AG04449 (cell line): ENCODE measurements at regions of chr5 and their contacts with region 1.

Region 1: GRCh38 chr5:149035372-149035790 is 27.5 kb downstream of the SH3TC2 start:
- DNase-seq: no peak
- H3K4me3 ChIP-seq: no peak overlapping the region
- CTCF ChIP-seq: peak; percentile 92

Region 2: GRCh38 chr5:148725677-148726076 is 309.7 kb before region 1 on chr5:
- CTCF ChIA-PET with region 1: interaction called, 911 read pairs
- POLR2A ChIA-PET with region 1: no interaction called
- DNase-seq: no peak
- H3K4me3 ChIP-seq: no peak overlapping the region
- CTCF ChIP-seq: no peak

Region 3: DNA sequence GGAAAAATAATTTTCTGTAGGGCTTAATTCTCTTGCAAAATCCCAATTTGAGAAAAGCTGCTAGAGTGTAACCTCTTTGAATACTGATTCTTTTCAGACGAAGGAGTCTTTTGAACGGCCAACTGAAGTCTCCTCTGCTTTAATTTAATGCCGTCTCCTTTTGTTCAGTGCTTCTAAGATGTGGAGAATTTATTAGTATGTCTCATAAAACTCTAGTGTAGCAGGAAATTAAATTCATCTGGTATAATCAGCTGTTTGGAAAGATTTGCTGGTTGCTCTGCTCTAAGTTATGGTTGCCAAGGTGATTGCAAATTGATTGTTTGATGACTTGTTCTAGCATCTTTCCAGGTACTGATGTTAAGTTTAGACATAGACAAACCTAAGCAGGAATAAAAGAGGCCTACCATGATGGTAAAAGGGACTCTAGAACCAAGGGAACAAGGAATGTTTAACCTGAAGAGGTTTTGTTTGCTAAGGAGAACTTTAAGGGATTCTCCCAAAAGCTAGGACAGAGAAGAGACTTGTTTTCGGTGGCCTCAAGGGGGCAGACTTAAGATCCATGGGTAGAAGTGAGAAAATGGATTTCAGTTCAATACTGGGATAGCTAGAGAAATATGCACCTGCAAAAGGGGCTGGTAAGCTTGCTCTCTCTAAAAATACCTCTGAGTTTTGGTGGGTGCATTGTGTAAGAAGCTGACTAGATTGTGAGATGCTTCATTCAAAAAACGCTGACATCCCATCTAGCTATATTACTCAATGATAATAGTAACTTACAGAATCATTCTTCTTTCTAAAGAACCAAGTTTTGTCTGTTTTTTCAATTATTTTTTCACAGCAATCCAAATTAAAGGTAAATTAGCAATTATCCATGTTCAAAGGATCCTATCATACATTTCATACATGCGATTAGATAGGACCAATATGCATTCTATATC is 214.7 kb before region 1 on chr5:
- CTCF ChIA-PET with region 1: interaction called, 41 read pairs
- POLR2A ChIA-PET with region 1: no interaction called
- DNase-seq: no peak
- H3K4me3 ChIP-seq: no peak overlapping the region
- CTCF ChIP-seq: peak; percentile 53

Region 4: DNA sequence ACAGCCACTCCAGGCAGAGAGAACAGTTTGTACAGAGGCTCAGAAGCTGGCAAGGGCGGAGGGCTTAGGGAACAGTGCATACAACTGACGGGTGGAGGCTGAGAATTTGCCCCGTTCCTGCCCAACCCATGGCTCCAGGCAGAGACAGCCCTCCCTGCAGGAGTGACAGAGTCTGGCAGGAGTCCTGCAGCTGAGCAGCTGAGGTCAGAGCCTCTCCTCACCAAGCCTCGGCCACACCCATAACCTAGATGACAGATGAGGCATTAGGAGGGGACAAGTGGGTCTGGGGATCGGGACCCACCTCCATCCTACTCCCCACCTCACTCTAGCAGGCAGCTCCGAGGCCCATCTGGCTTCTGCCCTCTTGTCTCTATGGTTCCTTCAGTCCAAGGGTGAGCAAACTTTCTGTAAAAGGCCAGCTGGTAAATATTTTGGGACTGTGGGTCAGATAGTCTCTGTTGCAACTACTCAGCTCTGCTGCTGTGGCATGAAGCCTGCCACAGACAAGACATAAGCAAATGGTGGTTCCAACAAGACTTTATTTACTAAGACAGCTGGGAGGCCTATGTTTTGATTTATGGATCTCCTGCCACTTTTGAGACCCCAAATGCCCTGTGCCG is 56.2 kb before region 1 on chr5:
- CTCF ChIA-PET with region 1: interaction called, 14 read pairs
- POLR2A ChIA-PET with region 1: no interaction called
- DNase-seq: no peak
- H3K4me3 ChIP-seq: no peak overlapping the region
- CTCF ChIP-seq: no peak

Region 5: GRCh38 chr5:149011074-149011476 is 24.3 kb before region 1 on chr5:
- CTCF ChIA-PET with region 1: interaction called, 72 read pairs
- POLR2A ChIA-PET with region 1: no interaction called
- DNase-seq: no peak
- H3K4me3 ChIP-seq: no peak overlapping the region
- CTCF ChIP-seq: no peak

Region 6: DNA sequence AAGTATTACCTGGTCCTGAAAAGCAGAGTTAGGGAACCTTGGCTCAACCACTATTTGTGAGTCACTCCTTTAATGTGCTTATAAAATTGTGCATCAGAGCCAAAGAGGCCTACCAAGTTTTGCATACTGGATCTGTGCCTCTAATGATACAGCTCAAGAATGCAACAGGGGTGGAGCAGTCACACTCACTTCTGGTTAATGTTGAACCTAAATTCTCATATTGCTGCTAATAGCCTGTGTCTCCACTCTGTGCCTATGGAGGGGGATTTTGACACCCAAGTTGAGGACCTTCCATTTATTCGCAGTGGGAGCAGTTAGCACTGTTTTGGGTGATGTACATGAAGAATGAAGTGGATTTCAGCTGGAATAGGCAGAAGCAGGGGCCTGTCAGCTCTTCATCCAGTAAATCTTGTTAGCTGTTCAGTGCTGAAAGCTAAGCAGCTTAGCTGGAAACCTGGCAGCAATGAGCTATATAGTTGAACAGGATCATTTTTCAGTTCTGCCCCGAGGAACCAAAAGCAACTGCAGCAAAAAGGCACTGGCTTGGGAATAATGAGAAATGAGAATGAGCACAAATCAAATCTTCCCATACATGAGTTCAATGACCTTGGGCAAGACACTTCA is 17.8 kb after region 1 on chr5:
- CTCF ChIA-PET with region 1: interaction called, 87 read pairs
- POLR2A ChIA-PET with region 1: no interaction called
- DNase-seq: no peak
- H3K4me3 ChIP-seq: no peak overlapping the region
- CTCF ChIP-seq: no peak